ENCODE measurements at regions of chr17 and their contacts with region 1.

Region 1: DNA sequence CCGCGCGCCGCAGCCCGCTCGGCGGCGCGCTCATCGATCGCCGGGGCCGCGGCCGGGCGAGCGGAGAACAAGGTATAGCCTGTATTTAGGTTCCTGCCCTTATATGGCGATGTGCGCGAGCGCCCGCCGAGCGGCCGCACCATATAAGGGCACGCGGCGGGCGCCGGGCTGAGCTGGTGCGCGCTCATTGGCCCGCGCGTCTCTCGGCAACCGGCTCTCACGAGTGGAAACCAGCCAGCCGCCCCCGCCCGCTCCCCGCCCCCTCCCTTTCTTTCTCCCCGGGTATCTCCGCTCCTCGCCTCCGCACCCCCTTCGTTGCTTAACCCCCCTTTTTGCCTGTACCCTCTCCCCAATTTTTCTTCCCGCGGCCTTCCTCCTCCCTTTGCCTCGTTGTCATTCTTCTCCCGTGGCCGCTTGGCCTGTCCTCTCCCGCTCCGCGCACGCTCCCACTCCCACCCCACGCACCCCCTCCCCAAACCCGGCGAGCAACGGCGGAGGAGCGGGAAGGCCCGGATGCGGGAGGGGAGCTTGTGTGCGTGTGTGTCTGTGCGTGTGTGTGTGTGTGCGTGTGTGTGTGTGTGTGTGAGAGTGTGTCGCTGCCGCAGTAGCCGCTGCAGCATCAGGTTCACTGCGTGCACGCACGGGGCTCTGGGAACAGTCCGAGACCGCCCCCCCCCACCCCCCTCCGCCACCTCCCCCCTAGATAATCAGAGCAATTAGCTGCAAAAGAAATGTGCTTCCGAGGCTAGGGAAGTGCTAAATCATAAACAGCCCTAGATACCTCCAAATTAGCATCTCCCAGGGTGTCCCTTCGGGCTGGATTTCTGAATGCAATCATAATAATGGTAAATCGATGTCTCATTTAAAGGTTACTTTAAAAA is 13.5 kb upstream of the CBX8 start:
- DNase-seq: no peak
- ATAC-seq: peak; percentile 65

Region 2: GRCh38 chr17:79749156-79749815 is 61.1 kb before region 1 on chr17:
- intact Hi-C with region 1: no loop called
- DNase-seq: no peak
- ATAC-seq: no peak

Region 3: DNA sequence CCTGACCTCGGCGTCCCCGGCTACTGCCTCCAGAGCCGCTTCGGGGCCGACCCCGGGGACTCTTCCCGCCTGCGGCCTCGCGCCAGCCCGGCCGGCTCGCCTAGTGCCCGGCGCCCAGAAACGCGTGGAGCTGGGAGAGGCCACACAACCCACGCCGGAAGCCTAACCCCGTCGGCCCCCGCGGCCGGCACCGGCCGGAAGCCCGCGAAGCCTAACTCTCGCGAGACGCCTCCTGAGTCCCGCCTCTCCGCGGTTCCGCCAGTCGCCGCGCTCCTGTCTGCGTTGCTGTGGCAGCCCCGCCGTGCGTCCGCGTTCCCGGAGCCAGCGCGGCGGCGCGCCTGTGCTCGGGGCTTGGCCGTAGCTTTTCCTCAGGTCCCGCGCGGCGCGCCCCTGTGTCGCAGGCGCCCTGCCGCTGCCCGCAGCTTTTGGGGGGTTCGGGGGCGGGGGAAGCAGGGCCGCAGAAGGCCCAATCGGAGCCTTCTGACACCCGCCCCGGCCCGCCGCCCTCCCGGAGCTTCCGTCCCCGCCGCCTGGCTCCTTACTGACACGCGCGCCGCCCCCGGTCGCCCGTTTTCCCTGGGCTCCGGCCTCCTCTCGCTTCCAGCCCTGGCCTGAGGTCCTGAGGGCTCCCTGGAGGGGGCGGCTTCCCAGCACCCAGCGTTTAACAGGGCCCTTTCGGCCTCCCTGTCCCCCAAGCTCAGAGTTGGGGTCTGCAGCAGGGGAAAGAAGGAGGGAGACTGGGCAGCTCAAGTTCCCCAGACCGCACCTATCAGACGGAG is 644.4 kb after region 1 on chr17:
- intact Hi-C with region 1: loop called (anchors 5 kb)
- DNase-seq: peak; percentile 98
- ATAC-seq: peak; percentile 96